ENCODE measurements at regions of chr1 and their contacts with region 1.

Region 1: DNA sequence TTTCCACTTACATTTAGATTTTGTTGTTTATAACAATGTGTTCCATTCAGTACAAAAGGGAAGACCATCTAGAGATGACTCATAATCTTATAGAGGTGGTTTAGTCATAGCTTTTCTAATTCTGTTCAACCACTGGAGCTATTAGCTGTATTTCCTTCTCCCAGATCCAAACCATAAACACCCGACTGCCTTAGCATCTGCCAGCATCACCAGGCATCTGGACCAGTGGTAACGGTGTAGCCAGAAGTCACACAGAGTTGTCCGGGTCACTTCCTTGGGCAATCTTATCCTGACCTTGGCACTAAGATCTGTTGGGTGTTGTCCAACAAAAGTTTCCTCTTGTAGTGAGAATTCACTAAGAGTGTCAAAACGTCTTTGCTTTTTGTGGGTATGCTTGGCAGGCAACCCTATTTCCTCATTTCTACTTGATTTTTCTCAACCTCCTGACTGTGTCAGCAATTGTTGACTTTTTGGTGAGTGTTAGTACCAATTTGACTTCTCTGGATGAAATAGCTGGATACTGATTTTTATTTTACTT is 372.1 kb upstream of the B3GALT2 start:
- DNase-seq: peak; percentile 20
- H3K4me3 Mint-ChIP-seq: no peak overlapping the region
- H3K27ac Mint-ChIP-seq: peak overlapping the region; percentile 1
- H3K4me1 Mint-ChIP-seq: peaks cover 22% of the 10 kb centered on the region
- H3K27me3 Mint-ChIP-seq: no peaks in the 10 kb centered on the region

Region 2: DNA sequence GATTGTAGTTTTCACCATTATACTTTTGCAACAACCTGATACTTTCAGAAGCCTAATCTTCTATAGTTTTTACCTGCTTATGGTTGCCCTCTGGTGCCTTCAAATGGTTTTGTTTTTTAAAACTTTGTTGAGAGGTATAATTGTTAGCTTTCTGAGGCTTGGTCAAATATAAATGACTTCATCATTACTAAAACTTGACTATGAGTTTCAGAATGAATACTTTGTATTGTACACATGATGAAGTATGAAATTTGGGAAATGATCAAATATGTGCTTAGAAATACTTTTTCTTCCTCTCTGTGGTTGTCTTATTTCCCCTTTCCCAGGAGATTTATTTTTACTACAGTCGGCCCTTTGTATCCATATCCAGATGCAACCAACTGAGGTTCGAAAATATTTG is 220.4 kb before region 1 on chr1:
- CTCF ChIA-PET with region 1: no interaction called
- POLR2A ChIA-PET with region 1: no interaction called
- intact Hi-C with region 1: no loop called
- DNase-seq: no peak
- H3K4me3 Mint-ChIP-seq: no peak overlapping the region
- H3K27ac Mint-ChIP-seq: no peak overlapping the region
- H3K4me1 Mint-ChIP-seq: peaks cover 6% of the 10 kb centered on the region
- H3K27me3 Mint-ChIP-seq: no peaks in the 10 kb centered on the region

Region 3: GRCh38 chr1:193569096-193569982 is 10.8 kb after region 1 on chr1:
- CTCF ChIA-PET with region 1: interaction called, 3 read pairs
- POLR2A ChIA-PET with region 1: no interaction called
- intact Hi-C with region 1: loop called (anchors 1 kb)
- DNase-seq: no peak
- H3K4me3 Mint-ChIP-seq: no peak overlapping the region
- H3K27ac Mint-ChIP-seq: peak overlapping the region; percentile 73
- H3K4me1 Mint-ChIP-seq: peaks cover 29% of the 10 kb centered on the region
- H3K27me3 Mint-ChIP-seq: no peaks in the 10 kb centered on the region

Region 4: GRCh38 chr1:193592317-193592716 is 33.8 kb after region 1 on chr1:
- CTCF ChIA-PET with region 1: no interaction called
- POLR2A ChIA-PET with region 1: no interaction called
- intact Hi-C with region 1: loop called (anchors 1 kb)
- DNase-seq: no peak
- H3K4me3 Mint-ChIP-seq: no peak overlapping the region
- H3K27ac Mint-ChIP-seq: no peak overlapping the region
- H3K4me1 Mint-ChIP-seq: peaks cover 22% of the 10 kb centered on the region
- H3K27me3 Mint-ChIP-seq: no peaks in the 10 kb centered on the region

Region 5: GRCh38 chr1:193602705-193603104 is 44.1 kb after region 1 on chr1:
- CTCF ChIA-PET with region 1: no interaction called
- POLR2A ChIA-PET with region 1: no interaction called
- intact Hi-C with region 1: no loop called
- DNase-seq: no peak
- H3K4me3 Mint-ChIP-seq: no peak overlapping the region
- H3K27ac Mint-ChIP-seq: no peak overlapping the region
- H3K4me1 Mint-ChIP-seq: peaks cover 12% of the 10 kb centered on the region
- H3K27me3 Mint-ChIP-seq: no peaks in the 10 kb centered on the region

Region 6: DNA sequence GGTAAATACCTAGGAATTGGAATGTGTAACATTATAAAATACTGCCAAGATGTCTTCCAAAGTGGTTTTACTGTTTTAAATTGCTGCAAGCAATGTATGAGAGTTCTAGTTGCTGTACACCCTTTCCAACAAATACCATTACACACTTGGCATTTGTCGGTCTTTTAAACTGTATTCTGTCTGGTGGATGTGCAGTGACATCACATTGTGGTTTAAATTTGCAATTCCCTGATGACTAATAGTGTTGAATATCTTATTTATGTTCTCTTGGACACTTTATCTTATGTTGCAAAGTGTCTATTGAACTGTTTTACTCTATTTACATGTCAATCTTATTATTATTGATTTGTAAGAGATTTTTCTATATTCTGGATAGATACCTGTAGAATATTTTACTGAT is 189.0 kb after region 1 on chr1:
- CTCF ChIA-PET with region 1: no interaction called
- POLR2A ChIA-PET with region 1: no interaction called
- intact Hi-C with region 1: no loop called
- DNase-seq: no peak
- H3K4me3 Mint-ChIP-seq: no peak overlapping the region
- H3K27ac Mint-ChIP-seq: no peak overlapping the region
- H3K4me1 Mint-ChIP-seq: no peaks in the 10 kb centered on the region
- H3K27me3 Mint-ChIP-seq: no peaks in the 10 kb centered on the region

Region 7: GRCh38 chr1:193763266-193763665 is 204.7 kb after region 1 on chr1:
- CTCF ChIA-PET with region 1: no interaction called
- POLR2A ChIA-PET with region 1: no interaction called
- intact Hi-C with region 1: no loop called
- DNase-seq: no peak
- H3K4me3 Mint-ChIP-seq: no peak overlapping the region
- H3K27ac Mint-ChIP-seq: no peak overlapping the region
- H3K4me1 Mint-ChIP-seq: no peaks in the 10 kb centered on the region
- H3K27me3 Mint-ChIP-seq: no peaks in the 10 kb centered on the region